ENCODE measurements at regions of chr4 and their contacts with region 1.

Region 1: GRCh38 chr4:139167774-139168444 is 9.1 kb downstream of the ELF2 start:
- DNase-seq: no peak
- ATAC-seq: peak; percentile 28
- H3K4me3 Mint-ChIP-seq: no peak overlapping the region
- H3K27ac Mint-ChIP-seq: no peak overlapping the region
- H3K4me1 Mint-ChIP-seq: peaks cover 21% of the 10 kb centered on the region
- H3K27me3 Mint-ChIP-seq: no peaks in the 10 kb centered on the region
- CTCF ChIP-seq: no peak

Region 2: DNA sequence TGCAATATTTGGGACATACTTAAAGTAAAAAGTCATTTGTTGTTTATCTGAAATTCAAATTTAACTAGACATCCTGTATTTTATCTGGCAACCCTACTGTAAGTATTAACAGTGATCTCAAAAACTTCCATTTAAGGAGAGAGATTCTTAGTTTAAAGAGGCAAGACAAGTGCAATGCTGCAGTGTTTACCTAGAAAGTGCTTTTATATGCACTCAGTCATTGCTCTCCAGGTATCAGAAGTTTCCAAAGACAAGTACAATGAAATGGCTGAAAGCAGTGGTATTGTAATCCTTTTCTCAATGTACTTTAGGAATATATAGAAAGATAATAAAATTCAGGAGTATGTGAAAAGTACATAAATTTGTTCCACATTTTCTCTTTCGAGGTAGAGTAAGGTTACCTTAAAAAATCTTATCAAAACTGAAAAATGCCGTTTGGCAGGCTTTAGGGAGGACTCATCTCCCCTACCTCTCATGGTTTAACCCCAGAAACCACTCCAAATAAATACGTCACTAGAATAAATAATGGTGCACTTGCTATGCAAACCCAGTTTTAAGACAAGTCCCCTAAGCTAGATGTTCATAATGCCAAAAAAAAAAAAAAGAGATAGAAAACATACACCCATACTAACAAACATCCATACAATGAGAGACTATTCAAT is 36.6 kb before region 1 on chr4:
- CTCF ChIA-PET with region 1: no interaction called
- POLR2A ChIA-PET with region 1: no interaction called
- intact Hi-C with region 1: loop called (anchors 5 kb)
- DNase-seq: no peak
- ATAC-seq: no peak
- H3K4me3 Mint-ChIP-seq: no peak overlapping the region
- H3K27ac Mint-ChIP-seq: no peak overlapping the region
- H3K4me1 Mint-ChIP-seq: no peaks in the 10 kb centered on the region
- H3K27me3 Mint-ChIP-seq: no peaks in the 10 kb centered on the region
- CTCF ChIP-seq: no peak